ENCODE measurements at regions of chr4 and their contacts with region 1.

Region 1: GRCh38 chr4:167021545-167022155 is 212.6 kb downstream of the SPOCK3 start:
- DNase-seq: peak; percentile 14
- H3K4me3 Mint-ChIP-seq: no peak overlapping the region
- H3K27ac Mint-ChIP-seq: no peak overlapping the region
- H3K4me1 Mint-ChIP-seq: no peaks in the 10 kb centered on the region
- H3K27me3 Mint-ChIP-seq: no peaks in the 10 kb centered on the region

Region 2: DNA sequence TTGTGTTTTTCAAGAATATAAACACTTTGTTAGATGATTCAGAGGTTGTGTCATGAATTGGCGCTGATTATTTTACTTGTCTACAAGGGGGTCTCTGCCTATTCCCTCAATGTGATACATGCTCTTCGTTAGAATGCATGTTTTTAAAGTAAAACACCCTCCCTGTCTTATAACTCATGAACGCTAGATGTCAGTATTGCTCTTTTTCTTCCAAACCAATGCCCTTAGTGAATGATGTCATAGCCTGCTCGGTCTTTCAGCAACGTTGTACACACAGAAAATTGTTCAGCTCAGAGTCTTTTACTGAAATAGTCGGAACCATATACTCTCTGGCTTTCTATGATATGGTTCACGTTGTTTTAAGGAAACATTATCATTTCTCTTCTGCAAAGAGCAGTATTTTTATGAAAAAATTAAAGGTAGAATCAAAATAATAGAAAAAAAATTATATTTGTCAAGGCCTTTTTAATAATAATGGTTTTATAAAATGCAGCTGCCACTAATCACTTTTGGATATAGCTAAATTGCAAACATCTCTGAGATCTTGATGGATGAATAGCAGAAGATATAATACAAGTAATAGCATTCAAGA is 855.7 kb before region 1 on chr4:
- intact Hi-C with region 1: loop called (anchors 1 kb)
- DNase-seq: no peak
- H3K4me3 Mint-ChIP-seq: no peak overlapping the region
- H3K27ac Mint-ChIP-seq: no peak overlapping the region
- H3K4me1 Mint-ChIP-seq: no peaks in the 10 kb centered on the region
- H3K27me3 Mint-ChIP-seq: no peaks in the 10 kb centered on the region

Region 3: DNA sequence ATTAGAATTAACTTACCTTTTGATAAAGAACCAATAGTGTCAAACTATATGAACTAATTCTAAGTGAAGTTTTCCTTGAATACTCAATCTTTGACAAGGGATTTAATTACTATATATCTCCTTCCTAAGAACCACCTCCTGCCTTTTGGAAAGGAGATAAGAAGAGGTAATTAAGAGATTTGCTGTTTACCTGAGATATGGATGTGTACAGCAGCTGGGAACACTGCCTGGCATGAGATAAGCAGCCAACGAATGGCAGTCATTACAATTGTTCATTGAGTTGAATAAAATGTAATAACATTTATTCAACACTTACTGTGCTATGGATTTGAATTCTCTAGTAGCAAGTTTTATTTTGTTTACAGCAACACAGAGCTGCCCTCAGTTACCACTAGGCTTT is 194.5 kb before region 1 on chr4:
- intact Hi-C with region 1: no loop called
- DNase-seq: no peak
- H3K4me3 Mint-ChIP-seq: no peak overlapping the region
- H3K27ac Mint-ChIP-seq: no peak overlapping the region
- H3K4me1 Mint-ChIP-seq: no peaks in the 10 kb centered on the region
- H3K27me3 Mint-ChIP-seq: no peaks in the 10 kb centered on the region

Region 4: GRCh38 chr4:167052631-167053091 is 31.0 kb after region 1 on chr4:
- intact Hi-C with region 1: no loop called
- DNase-seq: no peak
- H3K4me3 Mint-ChIP-seq: no peak overlapping the region
- H3K27ac Mint-ChIP-seq: no peak overlapping the region
- H3K4me1 Mint-ChIP-seq: no peaks in the 10 kb centered on the region
- H3K27me3 Mint-ChIP-seq: no peaks in the 10 kb centered on the region

Region 5: DNA sequence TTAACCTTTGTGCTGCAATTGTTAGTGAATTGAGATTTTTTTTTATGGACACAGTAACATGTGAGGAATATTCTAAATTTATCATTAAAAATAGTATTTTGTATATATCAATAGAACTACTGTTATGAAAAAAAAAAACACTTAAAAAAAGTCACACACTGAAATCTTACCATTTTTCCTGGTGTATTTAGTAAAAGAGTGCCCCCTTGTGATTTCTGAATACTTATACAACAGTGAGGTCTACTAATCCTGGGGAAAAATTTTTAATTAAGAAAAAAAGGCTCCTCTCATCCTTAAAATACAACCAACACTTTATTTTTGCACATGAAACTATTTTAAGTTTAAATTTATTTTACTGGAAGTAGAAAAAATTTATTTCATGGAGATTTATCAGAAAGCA is 269.0 kb after region 1 on chr4:
- intact Hi-C with region 1: loop called (anchors 5 kb)
- DNase-seq: no peak
- H3K4me3 Mint-ChIP-seq: no peak overlapping the region
- H3K27ac Mint-ChIP-seq: no peak overlapping the region
- H3K4me1 Mint-ChIP-seq: no peaks in the 10 kb centered on the region
- H3K27me3 Mint-ChIP-seq: no peaks in the 10 kb centered on the region

Region 6: DNA sequence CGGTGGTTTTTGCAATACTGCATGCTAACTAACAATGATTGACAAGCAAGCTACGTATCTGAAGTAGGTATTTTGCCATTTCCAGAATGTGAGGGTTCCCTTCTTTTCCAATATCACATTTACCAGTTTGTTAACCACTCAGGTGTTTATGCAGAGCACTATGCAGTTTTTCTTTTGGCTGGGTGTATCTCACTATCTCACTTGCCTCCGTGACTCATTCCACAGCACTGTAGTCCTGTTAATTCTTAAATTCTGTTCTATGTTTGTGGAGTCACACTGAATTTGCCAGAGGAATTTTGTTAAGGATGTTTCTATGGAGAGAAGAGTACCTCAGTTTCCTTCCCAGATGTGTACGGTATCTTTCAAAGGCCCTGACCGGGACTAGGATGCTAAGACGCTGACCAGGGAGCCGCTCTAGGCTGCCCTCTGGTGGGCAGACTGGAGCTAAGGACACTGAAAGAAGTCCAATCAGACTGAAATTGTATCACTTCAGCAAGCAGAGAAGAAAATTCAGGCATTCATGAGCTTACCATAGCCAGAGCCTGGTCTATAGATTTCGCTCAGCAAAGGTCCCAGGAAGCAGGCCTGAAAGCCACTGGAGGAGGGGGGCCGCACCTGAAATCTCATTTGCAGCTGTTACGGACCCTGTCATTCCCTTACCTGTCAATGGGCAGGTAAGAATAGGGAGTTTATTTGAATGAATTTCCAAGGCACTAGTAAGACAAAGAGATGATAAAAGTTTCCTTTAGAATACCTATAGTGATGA is 601.0 kb after region 1 on chr4:
- intact Hi-C with region 1: loop called (anchors 1 kb)
- DNase-seq: peak; percentile 5
- H3K4me3 Mint-ChIP-seq: no peak overlapping the region
- H3K27ac Mint-ChIP-seq: no peak overlapping the region
- H3K4me1 Mint-ChIP-seq: no peaks in the 10 kb centered on the region
- H3K27me3 Mint-ChIP-seq: no peaks in the 10 kb centered on the region

Region 7: DNA sequence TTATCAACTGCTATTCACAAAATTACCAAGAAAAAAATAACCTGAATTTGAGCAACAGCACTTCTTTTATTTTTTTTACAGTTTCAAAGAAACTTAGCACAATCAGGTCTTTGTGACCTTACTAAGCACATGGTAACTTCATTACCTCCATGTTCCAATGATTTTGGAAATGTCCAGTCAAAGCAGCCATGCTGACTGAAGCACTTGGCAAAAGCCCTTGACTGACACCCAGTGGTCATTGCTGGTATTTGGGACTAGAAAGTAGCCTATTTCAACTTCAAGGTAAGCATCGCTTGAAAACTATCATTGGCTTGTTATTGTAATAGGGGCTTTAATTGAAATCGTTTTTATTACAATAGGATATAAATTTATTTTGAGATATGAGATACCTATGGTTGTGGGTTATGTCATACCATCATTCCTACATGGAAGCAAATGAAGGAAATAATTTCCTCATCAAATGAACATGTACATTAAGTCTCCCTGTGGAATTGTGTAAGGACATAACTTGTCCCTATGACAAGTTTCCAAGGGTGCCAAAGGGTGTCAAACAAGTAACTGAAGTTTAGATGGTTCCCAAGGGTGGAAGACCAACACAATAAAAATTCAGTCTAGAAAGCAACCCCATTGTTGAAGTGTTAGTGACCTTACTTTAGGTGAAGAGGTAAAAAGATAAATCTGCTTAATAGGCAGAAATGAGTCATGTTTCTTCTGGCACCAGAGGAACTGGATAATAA is 1055.5 kb after region 1 on chr4:
- intact Hi-C with region 1: loop called (anchors 1 kb)
- DNase-seq: peak; percentile 2
- H3K4me3 Mint-ChIP-seq: no peak overlapping the region
- H3K27ac Mint-ChIP-seq: no peak overlapping the region
- H3K4me1 Mint-ChIP-seq: no peaks in the 10 kb centered on the region
- H3K27me3 Mint-ChIP-seq: no peaks in the 10 kb centered on the region

Region 8: GRCh38 chr4:168153596-168154440 is 1132.2 kb after region 1 on chr4:
- intact Hi-C with region 1: loop called (anchors 1 kb)
- DNase-seq: peak; percentile 14
- H3K4me3 Mint-ChIP-seq: no peak overlapping the region
- H3K27ac Mint-ChIP-seq: no peak overlapping the region
- H3K4me1 Mint-ChIP-seq: peaks cover 8% of the 10 kb centered on the region
- H3K27me3 Mint-ChIP-seq: no peaks in the 10 kb centered on the region

Region 9: DNA sequence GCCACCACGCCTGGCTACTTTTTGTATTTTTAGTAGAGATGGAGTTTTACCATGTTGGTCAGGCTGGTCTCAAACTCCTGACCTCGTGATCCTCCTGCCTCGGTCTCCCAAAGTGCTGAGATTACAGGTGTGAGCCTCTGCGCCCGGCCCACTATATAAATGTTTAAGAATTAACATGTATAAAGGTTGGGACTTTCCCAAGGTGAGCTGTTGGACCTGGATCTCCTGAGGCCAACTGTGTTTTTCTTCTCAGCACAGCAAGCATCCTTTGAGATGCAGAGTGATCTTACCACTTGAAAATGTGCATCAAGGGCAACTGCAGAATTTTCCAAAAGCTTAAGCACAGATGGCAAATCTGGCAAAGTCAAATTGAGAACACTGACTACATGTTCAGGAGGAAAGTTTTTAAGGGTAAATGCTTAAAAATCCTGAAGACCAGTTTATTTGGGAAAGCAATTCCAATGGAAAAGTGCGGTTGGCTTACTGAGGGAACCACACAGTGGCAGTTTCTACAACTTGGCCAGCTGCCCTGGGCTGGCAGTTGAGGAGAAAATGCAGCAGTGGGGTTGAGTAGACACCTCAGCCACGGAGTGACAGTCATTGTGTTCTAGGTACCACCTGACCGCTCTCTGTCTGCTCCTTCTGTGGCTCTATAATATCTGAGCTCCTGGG is 1819.5 kb after region 1 on chr4:
- intact Hi-C with region 1: no loop called
- DNase-seq: no peak
- H3K4me3 Mint-ChIP-seq: no peak overlapping the region
- H3K27ac Mint-ChIP-seq: no peak overlapping the region
- H3K4me1 Mint-ChIP-seq: peaks cover 20% of the 10 kb centered on the region
- H3K27me3 Mint-ChIP-seq: no peaks in the 10 kb centered on the region

Measured in activated T-helper 1 cell treated with anti-CD3 and anti-CD28 coated beads, Interleukin-12 subunit alpha, Interleukin-12 subunit beta, Interleukin-2, Interleukin-4 antibody, amounts not matched to agents 30 ng/mL and 10 ng/mL and 1 ng/mL, durations not matched to agents 14 hours and 24 hours and 36 hours (primary cell).